ENCODE measurements at regions of chr14 and their contacts with region 1.

Region 1: GRCh38 chr14:100557658-100558057 is 29.6 kb downstream of the BEGAIN start:
- DNase-seq: no peak
- H3K4me3 ChIP-seq: no peak overlapping the region
- H3K27ac ChIP-seq: no peak overlapping the region
- H3K4me1 ChIP-seq: peaks cover 0 to 19% (median 17%) of the 10 kb centered on the region in 4 experiments; a peak in 6 of 7 replicates
- H3K27me3 ChIP-seq: peaks cover 0 to 5% (median 2%) of the 10 kb centered on the region in 4 experiments; a peak in 3 of 7 replicates
- CTCF ChIP-seq: no peak
- EP300 ChIP-seq: no peak
- POLR2A ChIP-seq: no peak
- RAD21 ChIP-seq: no peak

Region 2: GRCh38 chr14:100568164-100568997 is 10.7 kb after region 1 on chr14:
- CTCF ChIA-PET with region 1: interaction called, 11 read pairs
- POLR2A ChIA-PET with region 1: interaction called, 3 read pairs
- DNase-seq: peak in 1 of 2 experiments; percentile 68
- H3K4me3 ChIP-seq: peak overlapping the region; percentile 38 to 73 (median 47)
- H3K27ac ChIP-seq: no peak overlapping the region
- H3K4me1 ChIP-seq: peaks cover 0 to 28% (median 22%) of the 10 kb centered on the region in 4 experiments; a peak in 6 of 7 replicates
- H3K27me3 ChIP-seq: peaks cover 23 to 47% (median 41%) of the 10 kb centered on the region in 4 experiments
- CTCF ChIP-seq: no peak
- EP300 ChIP-seq: no peak
- POLR2A ChIP-seq: no peak
- RAD21 ChIP-seq: no peak

Measured in H1 (cell line).